Dendritic cell treated with granulocyte-macrophage colony-stimulating factor and Interleukin-4, amounts not matched to agents 40 ng/mL and 50 ng/mL, for 4 days (primary cell): ENCODE measurements at regions of chr10 and their contacts with region 1.

Region 1: DNA sequence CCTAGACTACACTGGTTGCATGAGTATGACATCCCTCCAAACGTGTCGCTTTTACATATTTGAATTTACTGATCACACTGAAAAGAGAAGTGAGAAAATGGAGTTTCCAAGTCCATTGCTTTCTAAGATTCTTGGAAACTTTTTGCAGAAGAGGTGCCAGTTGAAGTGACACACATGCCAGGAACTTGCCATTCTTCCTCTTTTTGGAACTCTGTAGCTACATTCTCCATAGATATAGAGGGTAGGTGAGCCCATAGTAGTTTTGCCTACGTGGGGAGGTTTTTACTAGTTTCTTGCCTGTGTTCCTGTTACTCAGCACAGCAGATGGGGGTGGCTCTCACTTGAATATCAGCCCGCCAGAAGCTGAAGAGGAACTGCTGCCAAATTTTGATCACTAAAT is 286.6 kb upstream of the NRP1 start:
- H3K4me3 Mint-ChIP-seq: peak overlapping the region; percentile 50
- H3K27ac Mint-ChIP-seq: peak overlapping the region; percentile 93
- H3K4me1 Mint-ChIP-seq: peaks cover 64% of the 10 kb centered on the region
- H3K27me3 Mint-ChIP-seq: peaks cover 2% of the 10 kb centered on the region

Region 2: DNA sequence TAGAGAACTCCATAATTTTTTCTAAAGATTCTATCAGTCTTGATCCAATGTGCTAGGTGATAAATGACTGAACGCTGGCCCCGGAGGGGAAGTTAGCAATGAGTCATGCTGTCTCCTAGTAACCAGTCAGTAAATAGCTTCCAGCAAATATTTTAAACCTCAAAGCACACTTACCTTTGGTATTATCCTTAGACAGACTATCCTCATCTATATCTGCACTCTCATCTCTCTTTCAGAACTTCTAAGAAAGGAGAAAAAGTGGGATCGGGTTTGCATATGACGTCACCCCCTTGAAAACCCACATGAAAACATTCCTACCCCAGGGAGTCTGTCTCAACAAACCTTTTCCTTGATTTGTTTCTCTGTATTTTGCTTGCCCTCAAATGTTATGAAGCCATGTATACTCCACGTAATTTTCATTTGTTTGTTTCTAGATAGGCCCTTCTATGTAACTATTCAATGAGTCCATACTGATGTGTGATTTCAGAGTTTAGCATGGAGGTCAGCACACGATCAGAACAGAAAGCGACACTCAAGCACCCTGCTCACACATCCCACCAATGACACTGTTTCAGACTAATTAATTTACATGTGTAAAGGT is 111.8 kb before region 1 on chr10:
- intact Hi-C with region 1: loop called (anchors 5 kb)
- H3K4me3 Mint-ChIP-seq: no peak overlapping the region
- H3K27ac Mint-ChIP-seq: peak overlapping the region; percentile 79
- H3K4me1 Mint-ChIP-seq: peaks cover 26% of the 10 kb centered on the region
- H3K27me3 Mint-ChIP-seq: peaks cover 2% of the 10 kb centered on the region

Region 3: DNA sequence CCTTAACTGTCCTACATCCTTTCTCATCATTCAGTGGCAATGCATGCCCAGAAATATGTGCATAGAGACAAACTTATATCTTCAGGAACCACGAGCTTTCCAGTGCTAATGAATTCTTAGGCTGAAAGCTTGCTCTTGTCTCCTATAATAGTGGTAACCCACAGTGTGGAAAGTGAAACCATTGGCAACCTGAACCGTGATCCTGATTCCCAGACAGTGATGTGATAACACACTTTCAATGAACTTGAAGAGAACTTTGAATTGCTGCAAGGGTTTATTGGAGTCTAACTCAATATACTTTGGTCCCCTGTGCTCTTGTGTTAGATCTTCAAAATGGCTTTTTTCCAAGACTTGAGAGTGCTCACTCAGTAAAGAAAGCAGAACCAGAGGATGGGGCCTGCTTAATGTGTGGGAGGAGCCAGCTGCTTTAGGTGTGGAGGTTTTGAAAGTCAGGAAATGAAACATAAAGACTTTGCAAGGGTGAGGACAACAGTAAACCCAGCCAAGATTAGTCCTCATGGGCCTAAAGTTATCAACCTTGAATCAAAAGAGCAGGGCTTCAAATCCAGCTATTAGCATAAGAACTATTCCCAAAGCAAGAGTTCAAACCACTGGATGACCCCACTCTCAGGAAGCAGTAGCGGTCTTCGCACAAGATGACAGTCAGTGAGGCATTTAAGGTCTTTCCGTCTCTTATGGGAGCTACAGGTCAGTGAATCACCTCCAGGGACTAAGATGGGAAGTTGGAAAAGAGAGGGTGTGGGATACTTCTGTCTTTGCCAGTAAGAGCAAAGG is 45.8 kb after region 1 on chr10:
- intact Hi-C with region 1: loop called (anchors 5 kb)
- H3K4me3 Mint-ChIP-seq: no peak overlapping the region
- H3K27ac Mint-ChIP-seq: peak overlapping the region; percentile 75
- H3K4me1 Mint-ChIP-seq: peaks cover 42% of the 10 kb centered on the region
- H3K27me3 Mint-ChIP-seq: no peaks in the 10 kb centered on the region

Region 4: DNA sequence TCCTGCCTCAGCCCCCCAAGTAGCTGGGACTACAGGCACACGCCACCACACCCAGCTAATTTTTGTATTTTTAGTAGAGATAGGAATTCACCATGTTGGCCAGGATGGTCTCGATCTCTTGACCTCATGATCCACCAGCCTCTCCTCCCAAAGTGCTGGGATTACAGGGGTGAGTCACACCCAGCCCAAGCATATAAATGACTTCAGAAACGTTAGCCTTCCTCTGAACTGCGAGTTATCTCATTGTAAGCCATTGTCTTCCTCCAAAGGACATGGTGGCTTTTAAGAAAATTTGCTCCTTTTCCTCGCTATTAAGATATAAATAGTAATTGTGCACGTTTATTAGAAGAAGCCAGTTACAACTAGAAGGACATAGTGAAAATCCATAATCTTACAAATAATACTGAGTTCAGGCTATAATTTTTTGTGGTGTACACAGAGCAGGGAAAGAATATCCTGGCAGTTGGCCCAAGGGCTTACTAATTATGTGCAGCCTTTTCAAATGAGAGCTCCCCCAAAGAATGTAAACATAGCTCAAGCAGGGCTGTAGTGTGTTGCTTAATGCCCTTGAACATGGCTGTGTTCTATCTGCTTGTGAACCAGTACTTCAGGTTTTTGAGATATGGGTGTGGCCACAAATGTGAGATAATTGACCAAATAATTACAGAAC is 698.2 kb after region 1 on chr10:
- intact Hi-C with region 1: no loop called
- H3K4me3 Mint-ChIP-seq: no peak overlapping the region
- H3K27ac Mint-ChIP-seq: no peak overlapping the region
- H3K4me1 Mint-ChIP-seq: peaks cover 8% of the 10 kb centered on the region
- H3K27me3 Mint-ChIP-seq: no peaks in the 10 kb centered on the region